Lower leg skin (tissue), 4 donors: ENCODE measurements at regions of chr3 and their contacts with region 1.

Region 1: GRCh38 chr3:183385698-183386613 is 42.5 kb downstream of the MCF2L2 start:
- DNase-seq: peak in 1 of 2 donors; percentile 68
- H3K4me3 ChIP-seq: no peak overlapping the region
- CTCF ChIP-seq: no peak
- POLR2A ChIP-seq: no peak

Region 2: DNA sequence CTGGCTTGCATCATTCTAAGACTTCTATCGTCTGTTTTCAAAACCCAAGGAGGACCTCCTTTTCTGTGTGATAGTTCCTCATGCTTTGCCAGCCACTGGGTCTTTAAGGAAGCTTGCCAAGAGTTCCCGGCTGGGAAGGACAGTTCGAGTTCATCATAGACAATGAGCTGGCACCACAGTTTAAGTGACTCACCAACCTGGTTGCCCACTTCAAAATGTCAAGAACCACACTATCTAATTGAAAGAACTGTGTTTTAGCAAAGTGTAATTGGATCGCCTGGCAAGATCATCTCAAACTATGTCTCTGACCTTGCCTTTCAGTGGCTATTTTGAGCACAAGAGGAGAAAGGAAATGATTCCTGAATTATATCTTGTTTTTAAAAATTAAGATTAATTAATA is 1646.3 kb before region 1 on chr3:
- intact Hi-C with region 1: no loop called
- DNase-seq: no peak
- H3K4me3 ChIP-seq: no peak overlapping the region
- CTCF ChIP-seq: no peak
- POLR2A ChIP-seq: no peak

Region 3: DNA sequence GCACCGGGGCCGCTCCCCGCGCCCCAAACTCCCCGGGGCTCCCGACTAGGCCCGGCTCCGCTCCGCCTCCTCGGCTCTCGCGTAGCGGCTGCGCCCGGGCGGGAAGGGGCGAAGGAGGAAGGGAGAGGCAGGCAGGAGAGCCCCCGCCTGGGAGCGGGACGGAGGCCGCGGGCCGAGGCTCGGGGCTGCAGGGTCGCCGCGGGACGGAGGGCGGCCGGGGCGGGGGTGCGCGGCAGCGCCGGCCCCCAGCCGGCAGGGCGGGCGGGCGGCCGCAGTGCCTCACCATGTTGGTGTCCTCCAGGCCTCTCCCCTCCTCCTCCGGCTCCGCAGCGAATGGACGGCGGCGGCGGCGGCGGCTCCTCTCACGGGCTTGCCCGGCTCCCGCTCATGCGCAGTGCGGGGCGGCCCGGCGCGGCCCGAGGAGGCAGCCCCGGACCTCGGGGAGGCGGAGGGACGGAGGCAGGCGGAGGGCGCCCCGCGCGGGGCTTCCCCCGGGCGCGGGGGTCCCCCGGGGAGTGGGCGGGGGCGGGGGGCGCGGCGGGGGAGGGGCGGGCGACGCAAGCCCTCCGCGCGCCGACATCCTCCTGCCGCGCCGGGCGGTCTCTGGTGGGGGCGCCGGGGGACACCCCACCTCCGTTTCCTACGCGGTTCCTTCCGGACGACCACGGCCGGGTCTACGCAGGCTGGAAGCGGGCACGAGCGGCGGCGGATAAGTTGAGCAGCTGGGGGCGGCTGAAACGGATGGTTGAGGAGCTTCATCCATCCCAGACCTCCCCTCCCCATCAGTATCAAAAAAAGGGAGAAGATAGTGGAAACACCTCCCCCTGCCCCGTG is 405.5 kb before region 1 on chr3 and contains the start of gene DCUN1D1:
- intact Hi-C with region 1: no loop called
- DNase-seq: peak; percentile 79 to 97
- H3K4me3 ChIP-seq: peak within 1 kb of the TSS; percentile 68
- CTCF ChIP-seq: no peak
- POLR2A ChIP-seq: no peak
- total RNA-seq, gene DCUN1D1: 16.7 to 25.9 (median 19.6) TPM

Region 4: DNA sequence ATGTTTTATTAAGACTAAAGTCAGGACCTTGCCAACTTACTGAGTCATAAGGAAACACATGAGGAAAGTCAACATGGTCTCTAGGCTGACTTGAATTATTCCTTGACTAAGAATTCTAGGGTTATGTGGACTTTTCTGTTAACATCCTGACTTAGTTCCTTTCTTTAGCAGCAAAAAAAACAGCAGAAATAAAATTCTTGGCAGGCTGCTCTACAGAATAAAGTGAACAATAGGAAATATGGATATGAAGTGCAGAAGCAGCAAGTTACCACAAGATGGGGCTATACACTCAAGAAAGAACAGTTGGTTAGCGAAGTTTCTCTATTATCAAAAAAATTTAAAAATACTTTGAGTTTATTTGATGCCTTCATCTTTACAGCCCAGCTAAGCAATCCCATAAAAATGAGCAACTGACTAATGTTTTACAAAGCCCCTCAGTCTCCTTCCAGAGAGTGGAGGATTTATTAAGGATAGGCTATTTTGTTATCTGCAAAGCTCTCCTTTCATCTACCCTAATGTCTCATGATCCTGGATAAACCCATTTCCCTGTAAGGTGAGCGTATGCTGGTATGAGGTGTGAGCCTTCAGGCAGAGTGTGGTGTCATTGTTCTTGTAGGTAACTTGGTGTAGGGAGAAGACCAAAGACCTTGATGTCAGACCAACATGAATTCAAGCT is 263.6 kb before region 1 on chr3:
- intact Hi-C with region 1: loop called (anchors 5 kb)
- DNase-seq: peak in 1 of 2 donors; percentile 12
- H3K4me3 ChIP-seq: no peak overlapping the region
- CTCF ChIP-seq: peak in 1 of 3 donors; percentile 37
- POLR2A ChIP-seq: no peak

Region 5: GRCh38 chr3:183180105-183180783 is 205.7 kb before region 1 on chr3:
- intact Hi-C with region 1: loop called (anchors 5 kb)
- DNase-seq: no peak
- H3K4me3 ChIP-seq: no peak overlapping the region
- CTCF ChIP-seq: no peak
- POLR2A ChIP-seq: no peak